ENCODE measurements at regions of chr7 and their contacts with region 1.

Region 1: DNA sequence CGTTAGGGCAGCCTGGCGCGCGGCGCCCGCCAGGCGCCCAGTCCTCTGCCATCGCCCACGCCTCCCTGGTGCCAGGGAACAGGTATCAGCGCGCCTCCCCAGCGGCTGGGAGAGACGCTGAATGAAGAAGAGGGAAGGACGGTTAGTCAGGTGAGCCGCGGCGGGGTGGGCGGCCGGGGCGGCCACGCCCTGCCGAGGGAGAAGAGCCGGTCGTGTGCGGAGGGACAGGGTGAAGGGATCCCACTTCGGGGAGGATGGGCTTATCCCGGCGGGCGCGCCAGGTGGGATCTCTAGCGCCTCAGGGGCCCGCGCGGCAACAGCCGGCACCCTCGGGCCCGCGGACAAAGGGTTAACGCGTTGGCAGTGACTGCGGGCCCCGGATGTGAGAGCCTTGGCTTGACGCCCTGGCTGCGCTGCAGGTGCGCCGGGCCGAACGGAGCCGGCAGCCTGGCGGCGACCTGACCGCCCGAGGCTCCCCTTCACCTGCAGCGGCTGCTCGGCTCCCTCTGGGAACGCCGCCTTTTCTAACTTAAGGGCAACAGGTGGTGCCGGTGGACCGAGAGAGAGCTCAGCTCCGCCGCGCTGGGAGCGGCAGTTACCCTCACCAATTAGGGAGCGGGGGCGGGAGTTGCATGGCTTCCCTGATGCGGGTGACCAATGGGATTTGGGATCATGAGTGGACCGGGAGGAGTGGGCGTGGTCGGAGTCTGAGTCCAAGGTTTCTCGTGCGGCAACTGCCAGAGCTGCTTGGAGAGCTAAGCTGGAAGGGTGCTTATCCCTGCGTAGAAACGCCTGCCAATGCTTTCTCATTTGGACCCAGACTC is at the start of gene ARL4A:
- DNase-seq: peak; percentile 90
- H3K4me3 Mint-ChIP-seq: peak within 1 kb of the TSS; percentile 95
- H3K27ac Mint-ChIP-seq: peak within 1 kb of the TSS; percentile 87
- H3K4me1 Mint-ChIP-seq: peaks cover 32% of the 10 kb centered on the region
- H3K27me3 Mint-ChIP-seq: no peaks in the 10 kb centered on the region
- total RNA-seq, gene ARL4A: 9.5 and 10.2 TPM in 2 replicates

Region 2: DNA sequence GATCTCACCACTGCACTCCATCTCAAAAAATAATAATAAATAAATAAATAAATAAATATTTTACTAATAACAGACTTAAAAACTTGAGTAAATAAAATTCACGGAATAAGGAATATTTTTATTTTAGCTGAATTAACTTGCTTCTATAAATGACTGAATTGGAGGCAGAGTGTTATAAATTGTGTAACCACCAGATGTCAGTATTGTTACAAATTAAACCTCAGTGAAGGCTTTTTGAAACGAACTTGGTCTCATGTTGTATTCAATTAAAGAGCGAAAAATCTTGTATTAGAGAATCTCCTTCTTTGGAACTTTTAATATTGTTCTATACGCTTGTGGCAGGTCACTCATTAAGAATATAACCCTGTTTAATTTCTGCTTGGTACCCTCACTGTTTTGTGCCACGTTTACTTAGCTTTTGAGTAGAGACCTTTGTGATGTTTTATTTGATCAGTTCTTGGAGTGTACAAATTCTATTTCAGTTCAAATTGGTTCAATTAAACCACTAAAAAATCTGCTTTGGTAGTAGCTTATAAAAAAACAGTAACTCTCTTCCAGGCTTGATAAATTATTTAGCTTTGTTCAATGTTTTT is 162.2 kb before region 1 on chr7:
- intact Hi-C with region 1: loop called (anchors 1 kb)
- DNase-seq: no peak
- H3K4me3 Mint-ChIP-seq: no peak overlapping the region
- H3K27ac Mint-ChIP-seq: no peak overlapping the region
- H3K4me1 Mint-ChIP-seq: no peaks in the 10 kb centered on the region
- H3K27me3 Mint-ChIP-seq: peaks cover 16% of the 10 kb centered on the region

Region 3: GRCh38 chr7:12722636-12723605 is 35.8 kb after region 1 on chr7:
- intact Hi-C with region 1: loop called (anchors 2 kb)
- DNase-seq: no peak
- H3K4me3 Mint-ChIP-seq: no peak overlapping the region
- H3K27ac Mint-ChIP-seq: peak overlapping the region; percentile 41
- H3K4me1 Mint-ChIP-seq: peaks cover 23% of the 10 kb centered on the region
- H3K27me3 Mint-ChIP-seq: peaks cover 3% of the 10 kb centered on the region

Region 4: GRCh38 chr7:13057462-13058200 is 370.5 kb after region 1 on chr7:
- intact Hi-C with region 1: loop called (anchors 5 kb)
- DNase-seq: no peak
- H3K4me3 Mint-ChIP-seq: peak overlapping the region; percentile 64
- H3K27ac Mint-ChIP-seq: peak overlapping the region; percentile 67
- H3K4me1 Mint-ChIP-seq: peaks cover 22% of the 10 kb centered on the region
- H3K27me3 Mint-ChIP-seq: peaks cover 2% of the 10 kb centered on the region

Region 5: DNA sequence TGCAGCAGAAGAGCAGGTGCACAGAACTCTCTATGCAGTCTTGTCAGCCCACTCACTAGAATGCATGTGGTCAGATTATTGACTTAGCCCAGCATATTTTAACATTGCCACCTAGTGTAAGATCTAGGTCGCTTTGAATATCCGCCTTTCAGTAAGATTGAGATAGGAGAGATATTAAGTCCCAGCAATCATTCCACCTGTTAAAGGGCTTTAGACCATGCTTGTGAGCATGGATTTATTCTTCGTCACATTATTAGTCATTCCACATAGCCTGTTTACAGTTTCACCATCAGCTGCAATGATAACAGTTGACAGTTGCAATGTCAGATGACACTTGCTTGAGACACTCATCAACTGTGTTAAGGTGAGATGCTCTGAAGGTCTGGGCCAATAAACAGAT is 492.0 kb after region 1 on chr7:
- intact Hi-C with region 1: loop called (anchors 10 kb)
- DNase-seq: no peak
- H3K4me3 Mint-ChIP-seq: no peak overlapping the region
- H3K27ac Mint-ChIP-seq: no peak overlapping the region
- H3K4me1 Mint-ChIP-seq: no peaks in the 10 kb centered on the region
- H3K27me3 Mint-ChIP-seq: no peaks in the 10 kb centered on the region

Region 6: GRCh38 chr7:13476881-13477444 is 789.9 kb after region 1 on chr7:
- intact Hi-C with region 1: no loop called
- DNase-seq: no peak
- H3K4me3 Mint-ChIP-seq: no peak overlapping the region
- H3K27ac Mint-ChIP-seq: no peak overlapping the region
- H3K4me1 Mint-ChIP-seq: no peaks in the 10 kb centered on the region
- H3K27me3 Mint-ChIP-seq: no peaks in the 10 kb centered on the region

Region 7: DNA sequence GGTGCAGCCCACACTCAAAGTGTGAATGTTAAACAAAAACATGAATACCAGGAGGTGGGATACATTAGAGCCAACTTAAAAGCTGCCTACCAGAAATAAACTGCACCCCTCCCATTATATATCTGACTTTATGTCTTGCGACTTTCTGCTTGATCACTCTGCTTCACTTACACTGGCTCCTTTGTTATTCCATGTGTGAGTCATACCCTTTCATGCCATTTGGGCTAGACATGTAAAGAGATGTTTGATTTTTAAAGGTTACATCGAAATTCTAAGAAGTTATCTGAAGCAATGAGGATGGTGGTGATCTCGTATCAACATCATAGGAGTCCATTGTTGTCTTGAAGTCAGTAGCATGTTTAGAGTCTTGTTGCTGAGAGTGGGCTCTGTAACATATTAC is 1334.0 kb after region 1 on chr7:
- intact Hi-C with region 1: no loop called
- DNase-seq: no peak
- H3K4me3 Mint-ChIP-seq: no peak overlapping the region
- H3K27ac Mint-ChIP-seq: no peak overlapping the region
- H3K4me1 Mint-ChIP-seq: no peaks in the 10 kb centered on the region
- H3K27me3 Mint-ChIP-seq: no peaks in the 10 kb centered on the region